ENCODE measurements at regions of chr3 and their contacts with region 1.

Region 1: GRCh38 chr3:183085634-183086390 is 13.5 kb downstream of the MCCC1 start:
- DNase-seq: no peak
- H3K4me3 ChIP-seq: no peak overlapping the region
- H3K27ac ChIP-seq: no peak overlapping the region
- H3K27me3 ChIP-seq: no peaks in the 10 kb centered on the region
- CTCF ChIP-seq: peak; percentile 50

Region 2: GRCh38 chr3:183069086-183069485 is 16.7 kb before region 1 on chr3:
- CTCF ChIA-PET with region 1: interaction called, 12 read pairs
- POLR2A ChIA-PET with region 1: no interaction called
- DNase-seq: no peak
- H3K4me3 ChIP-seq: no peak overlapping the region
- H3K27ac ChIP-seq: no peak overlapping the region
- H3K27me3 ChIP-seq: no peaks in the 10 kb centered on the region
- CTCF ChIP-seq: no peak

Region 3: GRCh38 chr3:183099026-183099837 is 13.4 kb after region 1 on chr3 and contains the start of gene MCCC1:
- CTCF ChIA-PET with region 1: interaction called, 19 read pairs
- POLR2A ChIA-PET with region 1: no interaction called
- DNase-seq: peak; percentile 96
- H3K4me3 ChIP-seq: peak within 1 kb of the TSS; percentile 91
- H3K27ac ChIP-seq: peak within 1 kb of the TSS; percentile 61
- H3K27me3 ChIP-seq: no peaks in the 10 kb centered on the region
- CTCF ChIP-seq: peak; percentile 10; the same call in 1 of the 2 replicates
- polyA plus RNA-seq, gene MCCC1: 17.8 and 19.0 TPM in 2 replicates